ENCODE measurements at regions of chr5 and their contacts with region 1.

Region 1: GRCh38 chr5:151523335-151523734 is 67.8 kb downstream of the FAT2 start:
- DNase-seq: peak in 1 of 2 experiments; percentile 41
- H3K4me3 ChIP-seq: no peak overlapping the region
- H3K27ac ChIP-seq: no peak overlapping the region
- H3K4me1 ChIP-seq: peaks cover 5% of the 10 kb centered on the region; the same call in 1 of the 2 replicates
- H3K27me3 ChIP-seq: no peaks in the 10 kb centered on the region
- CTCF ChIP-seq: peak; percentile 76

Region 2: GRCh38 chr5:151051066-151051930 is 472.0 kb before region 1 on chr5:
- CTCF ChIA-PET with region 1: no interaction called
- POLR2A ChIA-PET with region 1: no interaction called
- intact Hi-C with region 1: no loop called
- DNase-seq: peak; percentile 59 to 65
- H3K4me3 ChIP-seq: no peak overlapping the region
- H3K27ac ChIP-seq: no peak overlapping the region
- H3K4me1 ChIP-seq: peaks cover 25% of the 10 kb centered on the region
- H3K27me3 ChIP-seq: no peaks in the 10 kb centered on the region
- CTCF ChIP-seq: peak; percentile 92

Region 3: GRCh38 chr5:151509231-151509630 is 14.1 kb before region 1 on chr5:
- CTCF ChIA-PET with region 1: interaction called, 10 read pairs
- POLR2A ChIA-PET with region 1: no interaction called
- intact Hi-C with region 1: no loop called
- DNase-seq: peak; percentile 46 to 60
- H3K4me3 ChIP-seq: no peak overlapping the region
- H3K27ac ChIP-seq: peak overlapping the region; percentile 37; the same call in 1 of the 2 replicates
- H3K4me1 ChIP-seq: peaks cover 20% of the 10 kb centered on the region
- H3K27me3 ChIP-seq: no peaks in the 10 kb centered on the region
- CTCF ChIP-seq: no peak

Region 4: DNA sequence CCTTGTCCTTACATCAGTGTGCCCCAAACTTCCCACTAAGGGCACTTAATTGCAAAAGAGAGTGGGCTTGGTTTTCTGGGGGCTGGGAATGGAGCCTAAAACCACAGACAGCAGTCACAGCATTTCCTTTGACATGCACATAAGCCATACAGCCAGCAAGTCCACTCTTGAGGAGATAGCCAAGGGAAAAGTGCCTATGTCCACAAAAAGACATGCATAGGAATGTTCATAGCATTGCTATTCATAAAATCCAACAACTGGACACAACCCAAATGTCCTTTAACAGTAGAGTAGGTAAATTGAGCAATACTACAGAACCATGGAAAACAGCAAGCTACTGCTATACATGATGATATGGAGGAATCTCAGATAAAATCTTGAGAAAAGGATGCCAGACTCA is 79.5 kb after region 1 on chr5:
- CTCF ChIA-PET with region 1: no interaction called
- POLR2A ChIA-PET with region 1: no interaction called
- intact Hi-C with region 1: no loop called
- DNase-seq: no peak
- H3K4me3 ChIP-seq: no peak overlapping the region
- H3K27ac ChIP-seq: no peak overlapping the region
- H3K4me1 ChIP-seq: peaks cover 19% of the 10 kb centered on the region
- H3K27me3 ChIP-seq: peaks cover 6% of the 10 kb centered on the region; the same call in 1 of the 2 replicates
- CTCF ChIP-seq: no peak